ENCODE measurements at regions of chr3 and their contacts with region 1.

Region 1: GRCh38 chr3:105868742-105869530 is at the start of gene CBLB:
- DNase-seq: peak; percentile 80
- H3K4me3 Mint-ChIP-seq: peak within 1 kb of the TSS; percentile 100
- H3K27ac Mint-ChIP-seq: peak within 1 kb of the TSS; percentile 99
- H3K4me1 Mint-ChIP-seq: peaks cover 48% of the 10 kb centered on the region
- H3K27me3 Mint-ChIP-seq: no peaks in the 10 kb centered on the region
- total RNA-seq, gene CBLB: 213 and 235 TPM in 2 replicates

Region 2: DNA sequence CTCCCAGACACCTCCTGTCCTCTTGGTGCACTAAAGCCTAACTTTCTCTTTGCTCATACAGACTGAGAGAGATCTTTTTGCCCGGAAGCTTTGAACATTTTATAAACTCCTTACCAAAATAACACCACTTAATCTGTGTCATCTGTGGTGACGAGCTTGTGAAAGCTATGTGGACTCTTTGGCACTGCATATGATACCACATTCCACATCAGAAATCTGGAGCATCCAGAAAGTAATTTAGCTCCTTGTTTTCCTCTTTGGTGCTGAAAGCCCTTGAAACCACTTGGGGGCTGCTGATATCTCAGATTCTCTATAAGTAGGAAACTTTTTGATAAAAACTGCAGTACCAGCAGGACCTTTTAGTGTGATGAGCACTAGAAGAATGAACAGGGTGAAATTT is 373.9 kb before region 1 on chr3:
- intact Hi-C with region 1: no loop called
- DNase-seq: no peak
- H3K4me3 Mint-ChIP-seq: no peak overlapping the region
- H3K27ac Mint-ChIP-seq: no peak overlapping the region
- H3K4me1 Mint-ChIP-seq: no peaks in the 10 kb centered on the region
- H3K27me3 Mint-ChIP-seq: no peaks in the 10 kb centered on the region

Region 3: GRCh38 chr3:105752744-105753415 is 116.1 kb before region 1 on chr3:
- intact Hi-C with region 1: loop called (anchors 2 kb)
- DNase-seq: peak; percentile 24
- H3K4me3 Mint-ChIP-seq: peak overlapping the region; percentile 57
- H3K27ac Mint-ChIP-seq: peak overlapping the region; percentile 98
- H3K4me1 Mint-ChIP-seq: peaks cover 88% of the 10 kb centered on the region
- H3K27me3 Mint-ChIP-seq: no peaks in the 10 kb centered on the region

Region 4: DNA sequence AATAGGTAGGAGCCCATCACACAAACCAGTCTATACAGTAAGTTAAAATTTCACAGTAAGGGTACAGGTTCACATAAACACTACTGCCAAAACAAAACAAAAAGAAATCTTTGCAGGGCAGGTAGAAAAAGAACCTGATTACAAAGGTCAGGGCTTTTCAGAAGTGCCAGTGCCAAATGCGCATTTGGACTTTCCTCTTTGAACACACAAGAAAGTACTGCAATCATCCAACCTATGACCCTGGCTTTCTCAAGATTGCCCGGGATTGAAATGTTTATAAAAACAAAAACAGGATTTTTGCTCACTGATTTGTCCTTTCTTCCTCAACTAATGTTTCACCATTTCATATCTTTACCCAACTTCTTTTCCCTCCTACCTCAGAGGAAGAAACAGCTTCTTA is 47.5 kb before region 1 on chr3:
- intact Hi-C with region 1: no loop called
- DNase-seq: no peak
- H3K4me3 Mint-ChIP-seq: no peak overlapping the region
- H3K27ac Mint-ChIP-seq: peak overlapping the region; percentile 66
- H3K4me1 Mint-ChIP-seq: peaks cover 68% of the 10 kb centered on the region
- H3K27me3 Mint-ChIP-seq: no peaks in the 10 kb centered on the region

Region 5: GRCh38 chr3:105847452-105847851 is 21.5 kb before region 1 on chr3:
- intact Hi-C with region 1: loop called (anchors 2 kb)
- DNase-seq: no peak
- H3K4me3 Mint-ChIP-seq: peak overlapping the region; percentile 45
- H3K27ac Mint-ChIP-seq: peak overlapping the region; percentile 85
- H3K4me1 Mint-ChIP-seq: peaks cover 65% of the 10 kb centered on the region
- H3K27me3 Mint-ChIP-seq: no peaks in the 10 kb centered on the region

Region 6: DNA sequence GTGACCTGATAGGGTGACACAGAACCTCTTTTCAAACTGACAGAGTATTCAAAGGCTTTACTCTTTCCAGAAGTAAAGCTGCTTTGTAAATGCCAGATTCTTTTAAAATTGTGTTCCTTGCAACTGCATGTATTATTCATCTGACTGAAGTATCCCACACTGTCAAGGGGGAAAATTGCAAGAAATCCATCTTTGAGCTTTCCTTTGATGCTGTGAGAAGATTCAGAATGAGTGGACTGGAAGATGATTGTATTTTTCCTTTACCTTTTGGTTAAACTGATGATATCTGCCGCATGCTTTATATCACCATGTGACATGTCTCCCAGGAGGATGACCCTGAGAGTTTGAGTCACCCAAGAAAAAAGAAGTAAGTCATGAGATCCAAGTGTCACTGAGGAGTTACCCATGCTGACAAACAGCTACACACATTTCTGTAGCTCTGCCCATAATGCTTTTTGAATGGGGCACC is 250.7 kb after region 1 on chr3:
- intact Hi-C with region 1: loop called (anchors 1 kb)
- DNase-seq: no peak
- H3K4me3 Mint-ChIP-seq: peak overlapping the region; percentile 20
- H3K27ac Mint-ChIP-seq: peak overlapping the region; percentile 90
- H3K4me1 Mint-ChIP-seq: peaks cover 37% of the 10 kb centered on the region
- H3K27me3 Mint-ChIP-seq: no peaks in the 10 kb centered on the region

Region 7: GRCh38 chr3:106215047-106215446 is 346.1 kb after region 1 on chr3:
- intact Hi-C with region 1: loop called (anchors 2 kb)
- DNase-seq: peak; percentile 5
- H3K4me3 Mint-ChIP-seq: peak overlapping the region; percentile 43
- H3K27ac Mint-ChIP-seq: peak overlapping the region; percentile 82
- H3K4me1 Mint-ChIP-seq: peaks cover 56% of the 10 kb centered on the region
- H3K27me3 Mint-ChIP-seq: no peaks in the 10 kb centered on the region

Region 8: GRCh38 chr3:106609666-106610301 is 740.8 kb after region 1 on chr3:
- intact Hi-C with region 1: loop called (anchors 5 kb)
- DNase-seq: peak; percentile 50
- H3K4me3 Mint-ChIP-seq: no peak overlapping the region
- H3K27ac Mint-ChIP-seq: peak overlapping the region; percentile 66
- H3K4me1 Mint-ChIP-seq: peaks cover 30% of the 10 kb centered on the region
- H3K27me3 Mint-ChIP-seq: no peaks in the 10 kb centered on the region